HEK293 (cell line): ENCODE measurements at regions of chr5 and their contacts with region 1.

Region 1: GRCh38 chr5:38922199-38922598 is 76.4 kb downstream of the OSMR start:
- H3K4me3 ChIP-seq: no peak overlapping the region
- H3K27ac ChIP-seq: no peak overlapping the region
- H3K4me1 ChIP-seq: no peaks in the 10 kb centered on the region
- CTCF ChIP-seq: peak; percentile 85

Region 2: GRCh38 chr5:38420691-38421390 is 501.4 kb before region 1 on chr5:
- CTCF ChIA-PET with region 1: interaction called, 11 read pairs
- POLR2A ChIA-PET with region 1: no interaction called
- H3K4me3 ChIP-seq: no peak overlapping the region
- H3K27ac ChIP-seq: no peak overlapping the region
- H3K4me1 ChIP-seq: peaks cover 14% of the 10 kb centered on the region
- CTCF ChIP-seq: peak; percentile 68

Region 3: DNA sequence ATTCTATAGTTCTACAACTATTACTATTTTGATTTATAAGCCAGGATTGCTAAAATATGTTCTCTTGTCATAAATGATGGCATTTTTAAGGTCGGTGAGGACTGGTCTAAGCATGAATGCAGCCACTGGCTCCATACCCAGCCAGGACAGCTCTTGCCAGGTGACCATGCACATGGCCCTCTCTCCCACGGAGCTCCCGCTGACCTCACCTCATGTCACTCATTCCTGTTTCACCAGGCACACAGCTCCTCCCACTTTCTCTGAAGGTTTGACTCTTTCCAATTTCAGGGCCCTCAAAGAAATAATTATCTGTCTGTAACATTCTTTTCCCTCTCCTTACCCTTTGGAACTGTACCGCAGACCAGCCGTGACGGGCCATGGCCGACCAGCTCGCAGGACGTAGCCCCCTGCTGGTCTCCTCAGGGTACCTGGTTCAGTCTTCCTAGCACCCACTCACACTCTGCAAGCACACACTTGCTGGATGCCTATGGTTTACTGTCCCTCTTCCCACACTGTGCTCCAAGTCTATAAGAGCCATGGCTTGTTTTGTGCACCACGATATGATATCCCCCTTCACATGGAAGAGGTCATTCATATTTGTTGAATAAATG is 438.3 kb before region 1 on chr5:
- CTCF ChIA-PET with region 1: no interaction called
- POLR2A ChIA-PET with region 1: no interaction called
- H3K4me3 ChIP-seq: no peak overlapping the region
- H3K27ac ChIP-seq: no peak overlapping the region
- H3K4me1 ChIP-seq: peaks cover 9% of the 10 kb centered on the region; the same call in 1 of the 2 replicates
- CTCF ChIP-seq: no peak

Region 4: GRCh38 chr5:38816083-38817030 is 105.8 kb before region 1 on chr5:
- CTCF ChIA-PET with region 1: interaction called, 52 read pairs
- POLR2A ChIA-PET with region 1: no interaction called
- H3K4me3 ChIP-seq: no peak overlapping the region
- H3K27ac ChIP-seq: no peak overlapping the region
- H3K4me1 ChIP-seq: peaks cover 4% of the 10 kb centered on the region
- CTCF ChIP-seq: no peak

Region 5: GRCh38 chr5:38831909-38832308 is 90.3 kb before region 1 on chr5:
- CTCF ChIA-PET with region 1: interaction called, 52 read pairs
- POLR2A ChIA-PET with region 1: interaction called, 3 read pairs
- H3K4me3 ChIP-seq: no peak overlapping the region
- H3K27ac ChIP-seq: no peak overlapping the region
- H3K4me1 ChIP-seq: peaks cover 2% of the 10 kb centered on the region; the same call in 1 of the 2 replicates
- CTCF ChIP-seq: no peak; the same call in 1 of the 2 replicates

Region 6: DNA sequence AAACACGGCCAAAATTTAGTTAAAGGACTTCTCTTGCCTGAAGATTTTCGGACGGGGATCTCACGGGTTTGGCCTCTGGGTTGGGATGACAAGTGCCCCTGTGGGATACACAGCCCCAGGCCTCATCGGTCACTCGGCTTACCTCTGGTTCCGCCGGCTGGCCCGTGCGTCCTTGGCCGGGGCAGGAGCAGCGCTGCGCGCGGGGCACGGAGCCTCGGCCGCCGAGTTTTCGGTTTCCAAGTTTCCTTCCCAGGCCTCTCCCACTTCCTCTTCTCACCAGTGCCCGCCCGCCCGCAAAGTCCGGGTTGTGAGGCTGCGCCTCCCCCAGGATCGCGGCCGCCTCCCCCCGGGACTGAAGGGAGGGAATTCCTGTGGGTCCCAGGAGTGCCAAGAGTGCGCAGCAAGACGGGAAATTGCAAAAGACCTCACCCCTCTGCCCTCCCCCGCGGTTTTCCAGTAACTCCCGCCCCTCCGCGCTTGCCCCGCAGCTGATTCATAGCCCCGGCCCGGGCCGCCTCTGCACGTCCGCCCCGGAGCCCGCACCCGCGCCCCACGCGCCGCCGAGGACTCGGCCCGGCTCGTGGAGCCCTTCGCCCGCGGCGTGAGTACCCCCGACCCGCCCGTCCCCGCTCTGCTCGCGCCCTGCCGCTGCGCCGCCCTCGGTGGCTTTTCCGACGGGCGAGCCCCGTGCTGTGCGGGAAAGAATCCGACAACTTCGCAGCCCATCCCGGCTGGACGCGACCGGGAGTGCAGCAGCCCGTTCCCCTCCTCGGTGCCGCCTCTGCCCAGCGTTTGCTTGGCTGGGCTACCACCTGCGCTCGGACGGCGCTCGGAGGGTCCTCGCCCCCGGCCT is 76.4 kb before region 1 on chr5 and contains the start of gene OSMR:
- CTCF ChIA-PET with region 1: interaction called, 14 read pairs
- POLR2A ChIA-PET with region 1: no interaction called
- H3K4me3 ChIP-seq: peak within 1 kb of the TSS; percentile 73
- H3K27ac ChIP-seq: peak within 1 kb of the TSS; percentile 61; the same call in 1 of the 2 replicates
- H3K4me1 ChIP-seq: peaks cover 5% of the 10 kb centered on the region; the same call in 1 of the 2 replicates
- CTCF ChIP-seq: 0 out of 2 replicates have a peak, but pooled peaks have one; percentile 12

Region 7: DNA sequence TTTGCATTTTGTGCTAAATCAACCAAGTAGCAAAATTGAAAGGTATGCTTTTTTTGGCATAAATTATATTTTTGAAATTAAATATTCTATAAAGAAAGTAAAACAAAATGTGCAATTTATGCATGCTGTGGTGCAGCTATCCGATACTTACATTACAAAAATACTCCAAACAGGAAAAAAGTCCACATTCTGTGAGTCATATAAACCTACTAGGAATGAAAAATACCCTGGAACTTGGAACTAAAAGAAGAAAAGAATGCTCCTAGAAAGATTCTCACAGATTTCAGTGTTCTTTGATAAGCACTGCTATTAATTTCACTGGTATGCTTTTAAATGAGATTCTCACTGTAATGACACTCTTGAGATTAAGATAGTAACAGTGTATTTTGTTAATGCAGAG is 16.2 kb after region 1 on chr5:
- CTCF ChIA-PET with region 1: interaction called, 21 read pairs
- POLR2A ChIA-PET with region 1: no interaction called
- H3K4me3 ChIP-seq: no peak overlapping the region
- H3K27ac ChIP-seq: no peak overlapping the region
- H3K4me1 ChIP-seq: peaks cover 4% of the 10 kb centered on the region; the same call in 1 of the 2 replicates
- CTCF ChIP-seq: no peak

Region 8: DNA sequence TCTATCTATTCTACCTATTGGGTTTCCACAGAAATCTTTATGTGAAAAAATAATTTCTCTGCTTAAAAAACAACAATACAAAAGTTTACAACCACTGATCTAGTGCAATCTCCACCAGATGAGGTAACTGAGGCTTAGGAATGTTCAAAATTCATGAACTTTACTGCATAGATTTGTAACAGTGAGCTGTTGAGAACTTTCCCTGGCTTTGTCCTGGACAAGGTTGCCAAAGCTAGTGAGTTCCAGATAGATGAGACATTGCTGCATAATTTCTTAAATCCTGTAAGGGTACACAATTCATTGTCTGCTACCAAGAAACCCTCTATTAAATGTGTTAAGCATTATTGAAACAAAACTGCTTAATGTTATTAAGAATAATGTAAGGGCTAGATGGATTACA is 26.3 kb after region 1 on chr5:
- CTCF ChIA-PET with region 1: interaction called, 10 read pairs
- POLR2A ChIA-PET with region 1: no interaction called
- H3K4me3 ChIP-seq: no peak overlapping the region
- H3K27ac ChIP-seq: no peak overlapping the region
- H3K4me1 ChIP-seq: no peaks in the 10 kb centered on the region
- CTCF ChIP-seq: no peak